ENCODE measurements at regions of chr11 and their contacts with region 1.

Region 1: DNA sequence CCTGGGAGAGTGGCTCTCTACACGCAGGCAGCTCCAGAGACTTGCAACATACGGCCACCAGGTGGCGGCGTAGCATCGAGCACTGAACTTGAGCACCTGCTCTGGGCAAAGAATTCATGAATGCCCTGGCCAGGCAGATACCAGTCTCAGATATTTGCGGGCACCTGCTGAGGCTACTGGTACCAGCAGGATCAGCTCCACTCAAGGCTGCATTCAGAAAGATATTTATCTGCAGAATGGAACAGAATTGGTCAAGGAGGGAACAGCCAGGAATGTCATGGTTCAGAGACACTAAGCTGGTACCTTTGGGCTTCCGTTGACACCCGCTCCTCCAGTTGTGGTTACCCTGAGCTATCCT is 10.8 kb upstream of the CCDC86 start:
- DNase-seq: peak; percentile 46
- H3K4me3 ChIP-seq: no peak overlapping the region
- H3K27ac ChIP-seq: peak overlapping the region; percentile 11
- H3K27me3 ChIP-seq: peaks cover 28% of the 10 kb centered on the region
- CTCF ChIP-seq: peak; percentile 94

Region 2: DNA sequence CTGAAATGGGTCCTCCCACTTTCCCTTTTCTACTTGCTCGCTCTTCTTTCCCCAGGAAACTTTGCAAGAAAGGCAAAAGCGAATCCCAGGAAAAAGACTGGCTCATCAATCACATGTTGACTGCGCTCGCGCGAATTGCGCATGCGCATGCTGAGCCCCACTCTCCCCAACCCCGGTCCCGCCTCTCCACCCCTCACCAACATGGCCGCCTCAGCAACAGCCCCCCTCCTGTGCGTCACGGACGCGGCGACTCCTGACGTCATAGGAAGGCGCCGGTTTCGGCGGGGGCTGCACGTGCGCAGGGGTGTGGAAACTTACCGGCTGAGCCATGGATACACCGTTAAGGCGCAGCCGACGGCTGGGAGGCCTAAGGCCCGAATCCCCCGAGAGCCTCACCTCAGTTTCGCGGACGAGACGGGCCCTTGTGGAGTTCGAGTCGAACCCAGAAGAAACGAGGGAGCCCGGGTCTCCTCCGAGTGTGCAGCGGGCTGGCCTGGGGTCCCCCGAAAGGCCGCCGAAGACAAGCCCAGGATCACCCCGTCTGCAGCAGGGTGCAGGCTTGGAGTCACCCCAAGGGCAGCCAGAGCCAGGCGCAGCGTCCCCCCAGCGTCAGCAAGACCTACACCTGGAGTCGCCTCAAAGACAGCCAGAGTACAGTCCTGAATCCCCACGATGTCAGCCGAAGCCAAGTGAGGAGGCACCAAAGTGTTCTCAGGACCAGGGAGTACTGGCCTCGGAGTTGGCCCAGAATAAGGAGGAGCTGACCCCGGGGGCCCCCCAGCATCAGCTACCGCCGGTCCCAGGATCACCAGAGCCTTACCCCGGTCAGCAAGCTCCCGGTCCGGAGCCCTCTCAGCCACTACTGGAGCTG is 10.9 kb after region 1 on chr11 and contains the start of gene CCDC86:
- CTCF ChIA-PET with region 1: interaction called, 33 read pairs
- POLR2A ChIA-PET with region 1: no interaction called
- DNase-seq: peak; percentile 91
- H3K4me3 ChIP-seq: peak within 1 kb of the TSS; percentile 89
- H3K27ac ChIP-seq: peak within 1 kb of the TSS; percentile 66
- H3K27me3 ChIP-seq: peaks cover 10% of the 10 kb centered on the region
- CTCF ChIP-seq: no peak
- polyA plus RNA-seq, gene CCDC86: 15.2 and 17.9 TPM in 2 replicates

Region 3: GRCh38 chr11:60855726-60856633 is 24.9 kb after region 1 on chr11 and contains the start of gene PTGDR2:
- CTCF ChIA-PET with region 1: interaction called, 10 read pairs
- POLR2A ChIA-PET with region 1: interaction called, 3 read pairs
- DNase-seq: no peak
- H3K4me3 ChIP-seq: no peak within 1 kb of the TSS
- H3K27ac ChIP-seq: no peak within 1 kb of the TSS
- H3K27me3 ChIP-seq: peaks cover 5% of the 10 kb centered on the region
- CTCF ChIP-seq: no peak
- polyA plus RNA-seq, gene PTGDR2: 0.84 and 0.92 TPM in 2 replicates

Region 4: DNA sequence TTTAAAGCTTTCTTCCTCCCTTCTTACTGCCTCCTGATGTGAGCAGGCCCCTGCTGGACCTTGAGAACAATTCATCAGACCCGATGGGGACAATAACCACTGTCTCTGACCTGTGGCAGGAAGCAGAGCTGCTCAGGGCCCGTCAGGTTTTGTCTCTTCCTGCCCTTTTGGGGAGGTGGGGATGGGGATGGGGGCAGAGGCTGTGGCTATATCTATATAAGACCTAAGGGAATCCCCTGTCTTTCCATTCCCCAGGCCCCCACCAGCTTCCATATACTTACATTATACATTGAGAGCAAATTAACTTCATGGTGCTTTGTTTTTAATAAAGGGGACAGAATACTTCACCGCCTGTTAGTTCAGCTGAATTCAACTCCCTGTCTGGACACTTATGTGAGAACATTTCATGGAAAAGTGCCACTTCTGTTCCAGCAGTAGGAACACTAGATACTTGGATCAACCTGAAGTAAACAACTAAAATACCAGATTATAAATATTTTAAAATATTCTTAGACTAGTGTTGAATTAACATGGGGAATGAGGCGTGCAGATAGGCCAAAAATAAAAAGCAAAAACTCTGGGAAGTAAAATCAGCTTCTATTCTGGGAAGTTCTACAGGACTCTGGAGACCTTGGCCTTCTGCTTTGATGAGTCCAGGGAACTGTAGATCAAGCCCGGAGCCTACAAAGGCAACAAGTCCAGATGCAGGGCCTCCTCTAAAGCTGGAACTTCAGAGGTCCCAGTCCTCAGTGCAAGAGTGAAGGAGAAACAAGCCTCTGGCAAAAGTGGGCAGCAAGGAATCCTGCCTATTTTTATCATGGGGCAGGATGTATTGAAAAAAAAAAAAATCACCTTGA is 47.4 kb after region 1 on chr11:
- CTCF ChIA-PET with region 1: interaction called, 11 read pairs
- POLR2A ChIA-PET with region 1: no interaction called
- DNase-seq: no peak
- H3K4me3 ChIP-seq: no peak overlapping the region
- H3K27ac ChIP-seq: no peak overlapping the region
- H3K27me3 ChIP-seq: no peaks in the 10 kb centered on the region
- CTCF ChIP-seq: no peak

Region 5: GRCh38 chr11:60899046-60899936 is 68.2 kb after region 1 on chr11:
- CTCF ChIA-PET with region 1: interaction called, 317 read pairs
- POLR2A ChIA-PET with region 1: interaction called, 3 read pairs
- DNase-seq: peak; percentile 24
- H3K4me3 ChIP-seq: no peak overlapping the region
- H3K27ac ChIP-seq: peak overlapping the region; percentile 31
- H3K27me3 ChIP-seq: no peaks in the 10 kb centered on the region
- CTCF ChIP-seq: peak; percentile 99

Region 6: DNA sequence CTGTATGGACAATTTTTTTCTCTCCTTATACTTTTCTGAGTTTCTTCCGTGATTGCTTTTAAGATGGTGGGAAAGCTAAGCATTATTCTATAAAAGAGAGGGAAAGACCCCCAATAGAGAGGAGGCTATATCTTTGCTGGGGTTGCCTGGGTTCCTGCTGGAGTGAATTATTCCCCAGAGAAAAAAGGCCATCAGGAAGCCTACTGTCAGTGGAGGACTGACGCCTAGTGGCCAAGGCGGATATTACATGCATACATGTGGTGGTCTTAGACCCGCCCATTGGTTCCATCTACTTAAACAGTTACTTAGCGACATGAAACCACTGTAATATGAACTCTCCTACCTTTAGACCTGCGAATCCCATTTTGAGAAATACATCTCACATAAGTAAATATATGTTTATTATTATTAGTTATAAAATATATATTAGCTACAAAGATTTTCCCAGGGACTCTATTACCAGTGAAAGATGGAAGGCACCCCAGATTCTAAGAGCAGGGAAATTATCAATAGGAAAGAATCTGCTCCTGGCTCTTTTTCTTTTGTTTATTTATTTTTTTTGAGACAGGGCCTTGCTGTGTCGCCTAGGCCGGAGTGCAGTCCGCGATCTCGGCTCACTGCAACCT is 356.5 kb after region 1 on chr11:
- CTCF ChIA-PET with region 1: interaction called, 16 read pairs
- POLR2A ChIA-PET with region 1: no interaction called
- DNase-seq: peak; percentile 61
- H3K4me3 ChIP-seq: no peak overlapping the region
- H3K27ac ChIP-seq: no peak overlapping the region
- H3K27me3 ChIP-seq: peaks cover 2% of the 10 kb centered on the region
- CTCF ChIP-seq: peak; percentile 97

Measured in AG04450 (cell line).